IMR-90 (cell line): ENCODE measurements at regions of chr1 and their contacts with region 1.

Region 1: DNA sequence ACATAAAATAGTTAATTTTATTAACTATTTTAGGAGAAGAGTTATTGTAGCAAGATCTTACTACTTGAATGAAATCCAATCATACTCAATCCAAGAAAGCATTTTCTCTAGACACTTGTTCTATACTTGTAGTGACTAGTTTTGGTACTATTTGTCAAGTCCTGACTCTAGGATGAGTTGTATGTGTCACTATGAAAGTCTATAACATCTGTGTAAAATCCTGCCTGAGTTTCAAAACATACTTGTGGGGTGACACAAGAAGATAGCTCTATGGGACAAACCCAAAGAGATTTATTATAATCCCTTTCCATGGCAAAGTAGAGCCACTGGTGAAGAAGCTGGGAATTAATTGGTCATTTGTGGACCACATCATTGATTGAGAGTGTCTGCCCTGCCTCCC is 1042.2 kb upstream of the ADGRL4 start:
- DNase-seq: no peak
- ATAC-seq: no peak
- H3K4me3 ChIP-seq: no peak overlapping the region
- H3K27ac ChIP-seq: no peak overlapping the region
- H3K4me1 ChIP-seq: no peaks in the 10 kb centered on the region
- H3K27me3 ChIP-seq: no peaks in the 10 kb centered on the region
- CTCF ChIP-seq: no peak
- POLR2A ChIP-seq: no peak
- RAD21 ChIP-seq: no peak

Region 2: GRCh38 chr1:79532555-79532954 is 516.2 kb before region 1 on chr1:
- CTCF ChIA-PET with region 1: no interaction called
- POLR2A ChIA-PET with region 1: no interaction called
- dilution Hi-C with region 1: no loop called
- in situ Hi-C with region 1: no loop called
- intact Hi-C with region 1: no loop called
- DNase-seq: no peak
- ATAC-seq: no peak
- H3K4me3 ChIP-seq: no peak overlapping the region
- H3K27ac ChIP-seq: no peak overlapping the region
- H3K4me1 ChIP-seq: no peaks in the 10 kb centered on the region
- H3K27me3 ChIP-seq: no peaks in the 10 kb centered on the region
- CTCF ChIP-seq: no peak
- POLR2A ChIP-seq: no peak
- RAD21 ChIP-seq: no peak

Region 3: GRCh38 chr1:80003250-80003649 is 45.5 kb before region 1 on chr1:
- CTCF ChIA-PET with region 1: no interaction called
- POLR2A ChIA-PET with region 1: no interaction called
- dilution Hi-C with region 1: no loop called
- in situ Hi-C with region 1: no loop called
- intact Hi-C with region 1: no loop called
- DNase-seq: no peak
- ATAC-seq: no peak
- H3K4me3 ChIP-seq: no peak overlapping the region
- H3K27ac ChIP-seq: no peak overlapping the region
- H3K4me1 ChIP-seq: no peaks in the 10 kb centered on the region
- H3K27me3 ChIP-seq: no peaks in the 10 kb centered on the region
- CTCF ChIP-seq: no peak
- POLR2A ChIP-seq: no peak
- RAD21 ChIP-seq: no peak

Region 4: DNA sequence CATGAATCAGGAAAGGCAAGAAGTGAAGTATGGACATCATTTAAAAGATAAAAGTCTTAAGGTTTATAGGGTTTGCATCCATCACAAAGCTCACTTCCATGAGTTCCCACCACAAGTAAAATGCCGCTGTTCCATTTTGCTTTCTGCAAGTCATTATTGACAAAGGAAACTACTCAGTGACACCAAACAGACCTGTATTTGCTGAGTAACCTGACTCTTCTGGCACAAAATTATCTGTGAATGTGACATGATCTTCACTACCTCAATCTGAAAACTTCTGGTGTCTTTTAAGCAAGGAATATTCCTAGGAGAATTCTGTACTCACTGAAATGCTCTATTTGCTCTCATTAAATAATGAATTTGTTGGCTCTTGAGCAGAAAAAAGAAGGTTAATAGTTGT is 35.2 kb after region 1 on chr1:
- CTCF ChIA-PET with region 1: no interaction called
- POLR2A ChIA-PET with region 1: no interaction called
- dilution Hi-C with region 1: no loop called
- in situ Hi-C with region 1: no loop called
- intact Hi-C with region 1: no loop called
- DNase-seq: no peak
- ATAC-seq: no peak
- H3K4me3 ChIP-seq: no peak overlapping the region
- H3K27ac ChIP-seq: no peak overlapping the region
- H3K4me1 ChIP-seq: no peaks in the 10 kb centered on the region
- H3K27me3 ChIP-seq: no peaks in the 10 kb centered on the region
- CTCF ChIP-seq: no peak
- POLR2A ChIP-seq: no peak
- RAD21 ChIP-seq: no peak

Region 5: DNA sequence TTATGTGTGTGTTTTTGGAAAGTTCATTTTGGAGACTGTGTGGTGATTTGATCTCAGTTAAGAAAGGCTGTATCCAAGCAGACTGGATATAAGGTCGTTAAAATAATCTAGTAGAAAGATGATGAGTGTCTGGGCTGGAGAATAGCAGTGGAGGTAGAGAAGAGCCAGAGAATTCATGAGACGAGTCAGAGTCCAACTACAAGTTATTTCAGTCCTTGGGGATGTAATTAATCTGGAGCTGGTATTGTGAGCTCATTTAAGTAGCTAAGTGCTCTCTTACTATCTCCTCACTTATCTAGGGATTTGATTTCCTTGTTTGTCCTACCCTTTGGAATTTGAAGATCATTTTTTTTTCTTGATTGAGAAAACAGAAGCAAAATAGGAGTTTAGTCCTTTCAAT is 176.8 kb after region 1 on chr1:
- CTCF ChIA-PET with region 1: no interaction called
- POLR2A ChIA-PET with region 1: no interaction called
- dilution Hi-C with region 1: no loop called
- in situ Hi-C with region 1: no loop called
- intact Hi-C with region 1: no loop called
- DNase-seq: no peak
- ATAC-seq: no peak
- H3K4me3 ChIP-seq: no peak overlapping the region
- H3K27ac ChIP-seq: no peak overlapping the region
- H3K4me1 ChIP-seq: no peaks in the 10 kb centered on the region
- H3K27me3 ChIP-seq: no peaks in the 10 kb centered on the region
- CTCF ChIP-seq: no peak
- POLR2A ChIP-seq: no peak
- RAD21 ChIP-seq: no peak

Region 6: GRCh38 chr1:81974883-81975555 is 1926.3 kb after region 1 on chr1:
- CTCF ChIA-PET with region 1: interaction called, 10 read pairs
- POLR2A ChIA-PET with region 1: no interaction called
- dilution Hi-C with region 1: no loop called
- in situ Hi-C with region 1: no loop called
- intact Hi-C with region 1: no loop called
- DNase-seq: no peak
- ATAC-seq: no peak
- H3K4me3 ChIP-seq: no peak overlapping the region
- H3K27ac ChIP-seq: no peak overlapping the region
- H3K4me1 ChIP-seq: no peaks in the 10 kb centered on the region
- H3K27me3 ChIP-seq: no peaks in the 10 kb centered on the region
- CTCF ChIP-seq: no peak
- POLR2A ChIP-seq: no peak
- RAD21 ChIP-seq: no peak